Activated CD4-positive, alpha-beta T cell treated with anti-CD3 and anti-CD28 coated beads for 36 hours (primary cell): ENCODE measurements at regions of chr6 and their contacts with region 1.

Region 1: GRCh38 chr6:42547407-42548329 is 16.2 kb upstream of the UBR2 start:
- DNase-seq: peak; percentile 94
- ATAC-seq: peak; percentile 99
- H3K4me3 Mint-ChIP-seq: peak overlapping the region; percentile 56
- H3K27ac Mint-ChIP-seq: peak overlapping the region; percentile 63
- H3K4me1 Mint-ChIP-seq: peaks cover 15% of the 10 kb centered on the region
- H3K27me3 Mint-ChIP-seq: peaks cover 10% of the 10 kb centered on the region

Region 2: DNA sequence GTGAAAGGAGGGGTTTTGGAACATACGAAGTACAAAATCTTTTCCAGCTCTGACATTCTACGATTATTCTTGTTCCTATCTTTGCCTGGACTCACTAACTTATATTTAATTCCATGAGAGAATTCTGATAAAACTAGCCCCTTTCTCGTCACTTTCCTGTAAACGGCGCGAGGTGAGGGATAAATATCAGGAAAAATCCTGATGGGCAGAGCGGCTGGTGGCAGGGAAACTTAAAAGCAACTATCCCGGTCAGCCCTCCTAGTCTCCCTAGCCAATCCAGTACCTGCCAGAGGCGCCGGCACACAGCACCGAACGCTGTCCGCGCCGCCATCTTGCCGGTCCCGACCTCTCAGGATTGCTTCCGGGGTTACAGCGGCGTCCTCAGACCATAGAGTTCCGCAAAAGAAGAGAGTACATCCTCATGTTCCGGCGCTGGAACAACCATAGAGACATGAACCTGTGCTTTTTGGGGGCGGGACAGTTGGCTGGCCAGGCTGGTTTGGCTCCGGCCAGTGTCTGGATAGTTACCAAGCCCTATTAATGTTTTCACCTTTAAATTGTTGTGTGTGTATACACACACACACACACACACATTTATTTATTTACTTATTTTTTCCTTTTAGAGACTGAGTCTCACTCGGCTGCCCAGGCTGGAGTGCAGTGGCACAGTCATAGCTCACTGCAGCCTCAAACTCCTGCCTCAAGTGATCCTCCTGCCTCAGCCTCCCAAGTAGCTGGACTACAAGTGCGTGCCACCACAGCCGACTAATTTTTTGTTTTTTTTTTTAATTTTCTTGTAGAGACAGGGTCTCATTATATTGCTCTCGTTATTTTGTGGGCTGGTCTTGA is 329.9 kb before region 1 on chr6 and contains the start of gene MRPS10:
- CTCF ChIA-PET with region 1: interaction called, 22 read pairs
- POLR2A ChIA-PET with region 1: interaction called, 3 read pairs
- intact Hi-C with region 1: loop called (anchors 1 to 2 kb)
- DNase-seq: peak; percentile 95
- ATAC-seq: peak; percentile 99
- H3K4me3 Mint-ChIP-seq: peak within 1 kb of the TSS; percentile 100
- H3K27ac Mint-ChIP-seq: peak within 1 kb of the TSS; percentile 95
- H3K4me1 Mint-ChIP-seq: peaks cover 32% of the 10 kb centered on the region
- H3K27me3 Mint-ChIP-seq: no peaks in the 10 kb centered on the region
- total RNA-seq, gene MRPS10: 35.2 to 36.2 TPM

Region 3: GRCh38 chr6:42260972-42261371 is 286.7 kb before region 1 on chr6:
- CTCF ChIA-PET with region 1: interaction called, 101 read pairs
- POLR2A ChIA-PET with region 1: no interaction called
- intact Hi-C with region 1: loop called (anchors 1 to 5 kb)
- DNase-seq: peak; percentile 65
- ATAC-seq: peak; percentile 74
- H3K4me3 Mint-ChIP-seq: no peak overlapping the region
- H3K27ac Mint-ChIP-seq: peak overlapping the region; percentile 40
- H3K4me1 Mint-ChIP-seq: no peaks in the 10 kb centered on the region
- H3K27me3 Mint-ChIP-seq: no peaks in the 10 kb centered on the region

Region 4: GRCh38 chr6:42390228-42390934 is 157.3 kb before region 1 on chr6:
- CTCF ChIA-PET with region 1: interaction called, 22 read pairs
- POLR2A ChIA-PET with region 1: no interaction called
- intact Hi-C with region 1: no loop called
- DNase-seq: peak; percentile 85
- ATAC-seq: peak; percentile 89
- H3K4me3 Mint-ChIP-seq: peak overlapping the region; percentile 63
- H3K27ac Mint-ChIP-seq: peak overlapping the region; percentile 97
- H3K4me1 Mint-ChIP-seq: peaks cover 98% of the 10 kb centered on the region
- H3K27me3 Mint-ChIP-seq: no peaks in the 10 kb centered on the region

Region 5: GRCh38 chr6:42453031-42453653 is 94.5 kb before region 1 on chr6:
- CTCF ChIA-PET with region 1: interaction called, 16 read pairs
- POLR2A ChIA-PET with region 1: no interaction called
- intact Hi-C with region 1: loop called (anchors 1 to 2 kb)
- DNase-seq: peak; percentile 87
- ATAC-seq: peak; percentile 76
- H3K4me3 Mint-ChIP-seq: peak overlapping the region; percentile 83
- H3K27ac Mint-ChIP-seq: no peak overlapping the region
- H3K4me1 Mint-ChIP-seq: peaks cover 34% of the 10 kb centered on the region
- H3K27me3 Mint-ChIP-seq: peaks cover 5% of the 10 kb centered on the region

Region 6: GRCh38 chr6:42537536-42537935 is 10.1 kb before region 1 on chr6:
- CTCF ChIA-PET with region 1: interaction called, 25 read pairs
- POLR2A ChIA-PET with region 1: no interaction called
- intact Hi-C with region 1: no loop called
- DNase-seq: no peak
- ATAC-seq: no peak
- H3K4me3 Mint-ChIP-seq: no peak overlapping the region
- H3K27ac Mint-ChIP-seq: no peak overlapping the region
- H3K4me1 Mint-ChIP-seq: no peaks in the 10 kb centered on the region
- H3K27me3 Mint-ChIP-seq: no peaks in the 10 kb centered on the region